HepG2 (cell line): ENCODE measurements at regions of chr15 and their contacts with region 1.

Region 1: DNA sequence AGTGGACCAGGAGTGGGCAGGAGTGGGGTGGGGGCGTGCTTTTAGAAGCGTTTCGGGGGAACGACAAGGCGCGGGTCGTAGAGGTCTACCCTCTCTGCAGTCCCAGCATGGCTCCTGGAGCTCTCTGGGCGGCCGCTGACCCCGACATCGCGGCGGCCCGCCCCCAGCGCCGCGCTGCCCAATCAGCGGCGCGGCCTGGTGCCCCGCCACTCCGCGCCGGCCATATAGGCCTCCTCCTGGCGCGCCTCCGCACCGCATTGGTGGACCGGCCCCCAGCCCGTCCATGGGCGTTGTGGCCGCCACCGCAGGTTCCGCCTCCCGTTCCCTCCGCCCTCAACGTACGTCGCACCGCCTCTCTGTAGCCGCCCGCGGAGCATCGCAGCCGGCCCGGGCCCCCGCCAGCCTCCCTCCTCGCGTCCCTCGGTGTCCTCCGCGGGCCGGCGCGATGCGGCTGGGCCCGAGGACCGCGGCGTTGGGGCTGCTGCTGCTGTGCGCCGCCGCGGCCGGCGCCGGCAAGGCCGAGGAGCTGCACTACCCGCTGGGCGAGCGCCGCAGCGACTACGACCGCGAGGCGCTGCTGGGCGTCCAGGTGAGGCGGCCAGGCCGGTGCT is at the start of gene RCN2:
- DNase-seq: peak; percentile 86
- ATAC-seq: peak; percentile 99
- H3K4me3 ChIP-seq: peak within 1 kb of the TSS; percentile 76 to 95 (median 87)
- H3K27ac ChIP-seq: peak within 1 kb of the TSS; percentile 75
- H3K4me1 ChIP-seq: peaks cover 40% of the 10 kb centered on the region
- H3K27me3 ChIP-seq: no peaks in the 10 kb centered on the region; a peak in 1 of 5 replicates
- CTCF ChIP-seq: no peak
- EP300 ChIP-seq: 0 out of 4 replicates have a peak, but pooled peaks of 1 of the 2 experiments have one; percentile 7
- POLR2A ChIP-seq: peak; percentile 87 to 97
- RAD21 ChIP-seq: peak; percentile 36
- total RNA-seq, gene RCN2: 62.3 and 89.0 TPM in 2 replicates

Region 2: DNA sequence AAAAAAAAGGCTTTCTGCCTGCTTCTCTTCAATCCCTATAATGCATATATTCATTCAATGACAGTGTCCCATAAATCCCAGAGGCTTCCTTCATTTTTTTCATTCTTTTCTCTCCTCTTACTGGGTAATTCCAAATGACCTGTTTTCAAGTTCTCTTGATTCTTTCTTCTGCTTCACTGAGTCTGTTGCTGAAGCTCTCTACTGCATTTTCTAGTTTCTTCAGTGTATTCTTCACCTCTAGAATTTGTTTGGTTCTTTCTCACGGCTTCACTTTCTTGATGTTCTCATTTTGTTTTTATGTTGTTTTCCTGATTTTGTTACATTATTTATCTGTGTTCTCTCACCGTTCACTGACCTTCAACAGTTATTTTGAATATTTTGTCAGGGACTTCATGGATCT is 167.9 kb before region 1 on chr15:
- CTCF ChIA-PET with region 1: no interaction called
- POLR2A ChIA-PET with region 1: no interaction called
- in situ Hi-C with region 1: no loop called
- intact Hi-C with region 1: no loop called
- DNase-seq: no peak
- ATAC-seq: no peak
- H3K4me3 ChIP-seq: no peak overlapping the region
- H3K27ac ChIP-seq: no peak overlapping the region
- H3K4me1 ChIP-seq: no peaks in the 10 kb centered on the region
- H3K27me3 ChIP-seq: no peaks in the 10 kb centered on the region; a peak in 1 of 5 replicates
- CTCF ChIP-seq: no peak
- EP300 ChIP-seq: no peak
- POLR2A ChIP-seq: no peak
- RAD21 ChIP-seq: no peak

Region 3: DNA sequence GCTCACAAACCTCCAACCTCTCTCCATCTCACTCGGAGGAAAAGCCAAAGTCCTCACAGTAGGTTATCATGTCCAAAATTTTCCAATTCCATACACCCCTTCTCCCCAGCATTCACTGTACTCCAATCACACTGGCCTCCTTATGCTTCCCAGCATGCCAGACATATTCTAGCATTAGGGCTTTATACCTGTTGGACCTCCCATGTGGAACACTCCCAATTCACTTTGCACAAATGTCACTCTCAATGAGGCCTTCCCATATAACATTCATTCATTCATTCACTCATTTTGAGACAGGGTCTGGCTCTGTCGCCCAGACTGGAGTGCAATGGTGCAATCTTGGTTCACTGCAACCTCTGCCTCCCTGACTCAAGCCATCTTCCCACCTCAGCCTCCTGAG is 46.3 kb before region 1 on chr15:
- CTCF ChIA-PET with region 1: no interaction called
- POLR2A ChIA-PET with region 1: interaction called, 7 read pairs
- in situ Hi-C with region 1: no loop called
- intact Hi-C with region 1: loop called (anchors 5 kb)
- DNase-seq: no peak
- ATAC-seq: no peak
- H3K4me3 ChIP-seq: no peak overlapping the region
- H3K27ac ChIP-seq: no peak overlapping the region
- H3K4me1 ChIP-seq: peaks cover 17% of the 10 kb centered on the region
- H3K27me3 ChIP-seq: no peaks in the 10 kb centered on the region
- CTCF ChIP-seq: no peak
- EP300 ChIP-seq: no peak
- POLR2A ChIP-seq: no peak
- RAD21 ChIP-seq: no peak

Region 4: DNA sequence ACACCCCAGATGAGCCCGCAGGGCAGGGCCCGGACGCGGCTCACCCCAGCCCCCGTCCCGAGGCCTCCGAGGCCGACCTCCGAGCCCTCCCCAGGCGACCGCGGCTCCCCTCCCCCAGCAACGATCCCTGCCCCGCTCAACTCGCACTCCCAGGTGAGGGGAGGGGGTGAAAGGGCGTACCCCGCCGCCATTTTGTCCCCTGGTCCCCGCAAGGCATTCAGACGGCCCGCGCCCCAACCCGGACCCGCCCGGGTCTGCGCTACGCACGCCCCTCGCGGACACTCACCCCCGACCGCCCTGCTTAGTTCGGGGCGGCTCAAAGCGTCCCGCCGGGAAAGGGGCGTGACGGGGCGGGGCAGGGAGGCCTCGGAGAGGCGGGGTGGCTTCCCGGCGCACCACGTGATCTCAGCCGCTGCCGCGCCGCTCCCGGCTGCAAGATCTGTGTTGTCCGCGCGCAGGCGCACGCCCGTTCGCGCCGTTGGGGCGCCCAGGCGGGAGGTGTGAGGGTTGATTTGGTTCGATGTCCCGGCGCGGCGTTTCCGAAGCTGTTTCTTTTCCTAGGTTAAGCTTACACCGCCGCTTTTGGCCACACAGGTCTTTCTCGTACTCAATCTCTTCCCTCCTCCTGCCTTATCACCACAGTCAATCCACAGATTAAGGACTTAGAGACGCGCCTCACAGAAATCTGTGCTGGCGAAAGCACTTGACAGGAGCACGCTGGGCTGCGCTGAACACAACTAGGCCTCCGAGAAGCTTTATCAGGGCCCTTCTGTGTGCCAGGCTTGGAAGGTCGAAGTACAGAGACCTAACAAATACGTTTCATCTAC is 26.3 kb before region 1 on chr15 and contains the start of gene SCAPER:
- CTCF ChIA-PET with region 1: no interaction called
- POLR2A ChIA-PET with region 1: interaction called, 28 read pairs
- in situ Hi-C with region 1: no loop called
- intact Hi-C with region 1: no loop called
- DNase-seq: peak; percentile 76
- ATAC-seq: peak; percentile 87
- H3K4me3 ChIP-seq: peak within 1 kb of the TSS; percentile 61 to 81 (median 81)
- H3K27ac ChIP-seq: peak within 1 kb of the TSS; percentile 70
- H3K4me1 ChIP-seq: peaks cover 43% of the 10 kb centered on the region
- H3K27me3 ChIP-seq: no peaks in the 10 kb centered on the region
- CTCF ChIP-seq: peak; percentile 4; the same call in 1 of the 2 replicates
- EP300 ChIP-seq: no peak
- POLR2A ChIP-seq: peak in 1 of 2 experiments; percentile 63; a peak in 2 of 4 replicates
- RAD21 ChIP-seq: no peak; the same call in 1 of the 2 replicates
- total RNA-seq, gene SCAPER: 7.6 and 10.5 TPM in 2 replicates